ENCODE measurements at regions of chr21 and their contacts with region 1.

Region 1: GRCh38 chr21:33199516-33200217 is 30.1 kb upstream of the IFNAR2 start:
- DNase-seq: peak; percentile 47 to 93 (median 79)
- ATAC-seq: peak; percentile 85 to 94 (median 92)
- H3K4me3 ChIP-seq: no peak overlapping the region
- H3K4me3 Mint-ChIP-seq: no peak overlapping the region
- H3K27ac ChIP-seq: peak overlapping the region; percentile 8
- H3K27ac Mint-ChIP-seq: peak overlapping the region; percentile 48 to 57
- H3K4me1 ChIP-seq: peaks cover 6 to 15% of the 10 kb centered on the region in 2 experiments
- H3K4me1 Mint-ChIP-seq: peaks cover 41 to 60% (median 46%) of the 10 kb centered on the region in 3 donors
- H3K27me3 ChIP-seq: peaks cover 0 to 3% of the 10 kb centered on the region in 2 experiments
- H3K27me3 Mint-ChIP-seq: peaks cover 0 to 5% of the 10 kb centered on the region in 2 donors

Region 2: DNA sequence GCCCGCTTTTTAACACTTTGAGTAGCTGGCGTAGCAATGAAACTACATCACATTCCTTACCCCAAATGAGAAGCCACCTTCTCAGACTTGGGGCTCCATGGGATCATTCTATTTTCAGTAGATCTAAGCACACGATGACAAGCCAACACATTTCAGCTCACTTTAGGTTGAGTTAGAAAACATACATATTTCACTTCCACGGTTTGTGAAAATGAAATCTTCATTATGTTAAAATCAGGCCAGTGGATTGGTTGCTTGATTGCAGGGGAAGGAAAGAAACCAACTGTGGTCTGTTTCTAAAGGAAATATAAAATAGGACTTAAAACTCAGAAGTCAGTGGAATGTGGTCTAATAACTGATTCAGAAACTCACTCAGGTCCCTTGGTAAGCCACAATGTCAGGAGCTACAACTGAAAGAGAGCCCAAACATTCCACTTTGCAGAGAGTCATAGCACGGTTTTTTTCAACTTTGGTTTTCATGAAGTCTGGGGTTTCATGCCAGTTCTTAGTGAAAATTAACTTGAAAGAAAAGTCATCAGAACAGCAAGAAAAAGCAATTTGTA is 1773.4 kb before region 1 on chr21:
- CTCF ChIA-PET with region 1: no interaction called
- POLR2A ChIA-PET with region 1: no interaction called
- DNase-seq: no peak
- ATAC-seq: no peak
- H3K4me3 ChIP-seq: no peak overlapping the region
- H3K4me3 Mint-ChIP-seq: no peak overlapping the region
- H3K27ac ChIP-seq: no peak overlapping the region
- H3K27ac Mint-ChIP-seq: peak overlapping the region in 1 of 2 donors; percentile 11
- H3K4me1 ChIP-seq: peaks cover 0 to 4% of the 10 kb centered on the region in 2 experiments
- H3K4me1 Mint-ChIP-seq: peaks cover 5 to 13% (median 10%) of the 10 kb centered on the region in 3 donors
- H3K27me3 ChIP-seq: no peaks in the 10 kb centered on the region
- H3K27me3 Mint-ChIP-seq: no peaks in the 10 kb centered on the region

Region 3: DNA sequence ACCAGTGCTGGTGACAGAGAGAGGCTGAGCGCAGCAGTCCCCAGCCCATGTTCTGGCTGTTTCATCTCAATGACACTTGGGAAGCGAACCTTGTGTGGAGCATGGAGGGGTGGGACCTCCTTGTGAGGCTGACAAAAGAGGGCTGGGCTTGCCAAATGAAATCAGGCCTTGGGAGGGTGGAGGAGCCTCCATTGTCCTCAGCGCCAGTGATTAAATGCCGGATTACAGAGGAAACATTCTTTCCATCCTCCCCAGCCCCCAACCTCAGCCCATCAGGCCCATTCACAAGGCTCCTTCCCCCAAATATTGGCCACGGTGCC is 364.8 kb before region 1 on chr21:
- CTCF ChIA-PET with region 1: interaction called, 8 to 15 read pairs
- POLR2A ChIA-PET with region 1: no interaction called
- DNase-seq: no peak
- ATAC-seq: no peak
- H3K4me3 ChIP-seq: no peak overlapping the region
- H3K4me3 Mint-ChIP-seq: no peak overlapping the region
- H3K27ac ChIP-seq: no peak overlapping the region
- H3K27ac Mint-ChIP-seq: no peak overlapping the region
- H3K4me1 ChIP-seq: no peaks in the 10 kb centered on the region
- H3K4me1 Mint-ChIP-seq: no peaks in the 10 kb centered on the region
- H3K27me3 ChIP-seq: peaks cover 0 to 6% of the 10 kb centered on the region in 2 experiments
- H3K27me3 Mint-ChIP-seq: peaks cover 4 to 9% of the 10 kb centered on the region in 2 donors

Region 4: DNA sequence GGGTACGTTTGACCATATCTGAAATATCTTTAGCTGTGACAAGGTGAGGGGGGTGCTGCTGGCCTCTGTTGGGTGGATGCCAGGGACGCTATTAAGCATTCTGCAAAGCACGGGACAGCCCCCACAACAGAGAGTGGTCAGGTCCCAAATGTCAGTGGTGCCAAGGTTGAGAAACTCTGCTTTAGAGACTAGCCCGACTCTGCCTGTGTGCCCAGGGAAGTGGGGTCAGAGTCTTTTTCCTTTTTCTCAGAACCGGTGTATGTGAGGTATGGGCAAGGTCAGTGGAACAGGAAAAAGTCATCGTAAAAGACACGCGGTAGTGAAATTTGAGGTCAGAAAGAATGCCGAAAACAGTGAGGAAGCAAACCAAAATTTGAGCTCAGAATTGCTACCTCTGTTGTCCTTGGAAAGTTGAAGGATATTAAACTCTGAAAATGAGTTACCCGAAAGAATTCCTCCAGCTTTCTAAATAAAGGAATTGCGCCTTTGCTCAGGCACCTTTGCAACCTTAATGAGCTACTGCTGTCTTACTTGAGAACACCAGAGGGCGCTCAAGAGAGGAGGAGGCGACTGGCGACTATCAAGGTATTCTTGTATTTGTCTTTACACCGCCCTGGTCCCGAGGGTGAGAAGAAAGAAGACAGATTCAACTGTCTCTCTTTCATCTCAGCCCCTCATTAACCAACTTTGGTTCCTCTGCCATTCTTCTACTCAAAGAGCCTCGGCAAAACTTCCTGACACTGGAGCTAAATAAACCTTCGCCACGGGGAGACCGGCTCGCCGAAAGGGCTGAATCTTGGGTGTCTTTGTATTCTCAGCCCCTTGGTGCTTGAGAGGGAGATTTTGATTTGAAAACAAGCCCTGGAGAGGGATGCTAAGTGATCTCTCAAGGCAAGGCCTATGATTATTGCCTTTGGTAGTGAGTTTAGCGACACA is 259.3 kb before region 1 on chr21:
- CTCF ChIA-PET with region 1: interaction called, 3 to 17 read pairs
- POLR2A ChIA-PET with region 1: no interaction called
- DNase-seq: peak in 28 of 35 experiments; percentile 4 to 79 (median 28)
- ATAC-seq: peak in 2 of 4 experiments; percentile 47 to 69
- H3K4me3 ChIP-seq: no peak overlapping the region
- H3K4me3 Mint-ChIP-seq: no peak overlapping the region
- H3K27ac ChIP-seq: no peak overlapping the region
- H3K27ac Mint-ChIP-seq: no peak overlapping the region
- H3K4me1 ChIP-seq: peaks cover 0 to 3% of the 10 kb centered on the region in 2 experiments
- H3K4me1 Mint-ChIP-seq: peaks cover 0 to 7% (median 4%) of the 10 kb centered on the region in 3 donors
- H3K27me3 ChIP-seq: peaks cover 0 to 12% of the 10 kb centered on the region in 2 experiments
- H3K27me3 Mint-ChIP-seq: peaks cover 0 to 4% of the 10 kb centered on the region in 2 donors

Region 5: DNA sequence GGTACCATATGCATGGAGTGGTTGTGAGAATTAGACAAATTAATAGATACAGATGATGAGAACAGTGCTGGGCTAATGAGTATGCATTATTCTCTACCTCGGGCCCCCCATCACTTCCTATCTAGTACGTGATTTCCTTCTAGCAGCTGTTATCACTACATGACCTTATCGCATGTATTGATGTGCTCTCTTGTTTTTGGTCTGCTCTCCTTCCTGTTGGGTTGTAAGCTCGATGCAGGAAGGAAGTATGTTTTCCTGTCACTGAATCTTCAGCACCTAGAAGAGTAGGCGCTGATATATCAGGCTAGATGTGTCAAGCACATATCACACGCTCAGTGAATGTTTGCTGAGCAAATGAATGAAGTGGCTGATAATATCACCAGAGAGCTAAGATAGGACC is 13.8 kb before region 1 on chr21:
- CTCF ChIA-PET with region 1: interaction called, 5 to 15 read pairs
- POLR2A ChIA-PET with region 1: no interaction called
- DNase-seq: peak in 24 of 35 experiments; percentile 3 to 69 (median 24)
- ATAC-seq: peak; percentile 96 to 97 (median 97)
- H3K4me3 ChIP-seq: peak overlapping the region in 1 of 2 donors; percentile 41
- H3K4me3 Mint-ChIP-seq: peak overlapping the region; percentile 52 to 73 (median 53)
- H3K27ac ChIP-seq: peak overlapping the region; percentile 37
- H3K27ac Mint-ChIP-seq: peak overlapping the region; percentile 93
- H3K4me1 ChIP-seq: peaks cover 0 to 34% of the 10 kb centered on the region in 2 experiments
- H3K4me1 Mint-ChIP-seq: peaks cover 34 to 60% (median 48%) of the 10 kb centered on the region in 3 donors
- H3K27me3 ChIP-seq: peaks cover 0 to 2% of the 10 kb centered on the region in 2 experiments
- H3K27me3 Mint-ChIP-seq: peaks cover 0 to 6% of the 10 kb centered on the region in 2 donors

Region 6: GRCh38 chr21:33324291-33325221 is 124.9 kb after region 1 on chr21 and contains the start of gene IFNAR1:
- CTCF ChIA-PET with region 1: interaction called in 1 of 2 experiments, 13 read pairs
- POLR2A ChIA-PET with region 1: no interaction called
- DNase-seq: peak; percentile 94 to 100 (median 98)
- ATAC-seq: peak; percentile 88 to 94 (median 91)
- H3K4me3 ChIP-seq: peak within 1 kb of the TSS; percentile 67 to 97
- H3K4me3 Mint-ChIP-seq: no peak within 1 kb of the TSS
- H3K27ac ChIP-seq: peak within 1 kb of the TSS; percentile 92
- H3K27ac Mint-ChIP-seq: no peak within 1 kb of the TSS
- H3K4me1 ChIP-seq: peaks cover 19 to 23% of the 10 kb centered on the region in 2 experiments
- H3K4me1 Mint-ChIP-seq: peaks cover 29 to 32% (median 30%) of the 10 kb centered on the region in 3 donors
- H3K27me3 ChIP-seq: no peaks in the 10 kb centered on the region
- H3K27me3 Mint-ChIP-seq: no peaks in the 10 kb centered on the region
- total RNA-seq, gene IFNAR1: 22.1 to 51.1 (median 45.6) TPM

Region 7: DNA sequence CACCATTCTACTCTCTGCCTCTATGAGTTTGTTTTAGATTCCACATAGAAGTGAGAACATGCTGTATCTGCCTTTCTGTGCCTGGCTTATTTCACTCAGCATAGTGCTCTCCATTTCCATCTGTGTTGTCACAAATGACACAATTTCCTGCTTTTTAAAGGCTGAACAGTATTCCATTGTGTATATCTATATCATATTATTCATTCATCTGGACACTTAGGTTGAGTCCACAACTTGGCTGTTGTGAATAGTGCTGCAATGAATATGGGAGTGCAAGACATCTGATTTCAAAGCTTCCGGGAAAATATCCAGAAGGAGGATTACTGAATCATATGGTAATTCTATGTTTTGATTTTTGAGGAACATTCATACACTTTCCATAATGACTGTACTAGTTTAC is 408.9 kb after region 1 on chr21:
- CTCF ChIA-PET with region 1: interaction called, 5 to 10 read pairs
- POLR2A ChIA-PET with region 1: no interaction called
- DNase-seq: no peak
- ATAC-seq: no peak
- H3K4me3 ChIP-seq: no peak overlapping the region
- H3K4me3 Mint-ChIP-seq: no peak overlapping the region
- H3K27ac ChIP-seq: no peak overlapping the region
- H3K27ac Mint-ChIP-seq: no peak overlapping the region
- H3K4me1 ChIP-seq: no peaks in the 10 kb centered on the region
- H3K4me1 Mint-ChIP-seq: peaks cover 3 to 5% (median 4%) of the 10 kb centered on the region in 3 donors
- H3K27me3 ChIP-seq: no peaks in the 10 kb centered on the region
- H3K27me3 Mint-ChIP-seq: no peaks in the 10 kb centered on the region